CD4-positive, alpha-beta T cell (primary cell): ENCODE measurements at regions of chr13 and their contacts with region 1.

Region 1: DNA sequence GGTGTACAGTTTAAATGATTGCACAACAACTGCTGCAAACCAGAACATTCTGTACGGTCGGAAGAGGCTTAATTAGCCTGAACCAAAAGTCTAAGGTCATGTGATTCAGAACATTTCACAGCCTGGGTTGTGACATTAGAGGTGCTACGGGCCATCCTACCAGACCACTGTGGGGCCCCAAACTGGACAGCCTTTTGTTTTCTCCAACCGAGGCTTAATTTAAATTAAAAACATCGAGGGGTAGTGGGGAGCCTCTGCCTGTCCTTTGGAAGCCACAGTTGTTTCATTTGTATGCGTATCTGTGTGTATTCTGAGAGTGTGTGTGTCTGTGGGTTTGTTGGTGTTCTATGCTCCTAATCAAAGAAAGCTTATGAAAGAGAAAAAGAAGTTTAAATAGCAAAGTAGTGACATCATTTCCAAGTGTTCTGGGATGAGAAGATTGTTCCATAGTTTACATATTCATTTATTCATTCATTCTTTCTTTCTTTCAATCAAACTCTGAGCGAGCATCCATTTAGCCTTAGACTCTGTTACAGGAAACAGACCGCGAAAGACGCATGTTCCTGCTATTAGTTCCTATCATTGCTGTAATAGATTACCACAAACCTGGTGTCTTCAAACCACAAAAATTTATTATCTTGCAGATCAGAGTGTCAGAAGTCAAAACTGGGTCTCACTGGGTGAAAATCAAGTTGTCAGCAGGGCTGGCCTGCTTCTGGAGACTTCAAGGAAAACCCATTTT is 444.8 kb downstream of the FOXO1 start:
- DNase-seq: peak in 11 of 14 experiments; percentile 13 to 87 (median 40)
- ATAC-seq: peak; percentile 83
- H3K4me3 ChIP-seq: peak overlapping the region; percentile 19
- H3K4me3 Mint-ChIP-seq: peak overlapping the region; percentile 68
- H3K27ac ChIP-seq: peak overlapping the region in 1 of 2 donors; percentile 70
- H3K27ac Mint-ChIP-seq: peak overlapping the region; percentile 85
- H3K4me1 ChIP-seq: peaks cover 40% of the 10 kb centered on the region
- H3K4me1 Mint-ChIP-seq: peaks cover 48% of the 10 kb centered on the region
- H3K27me3 ChIP-seq: no peaks in the 10 kb centered on the region
- H3K27me3 Mint-ChIP-seq: no peaks in the 10 kb centered on the region
- CTCF ChIP-seq: no peak

Region 2: GRCh38 chr13:40149611-40150274 is 71.9 kb before region 1 on chr13:
- CTCF ChIA-PET with region 1: no interaction called
- POLR2A ChIA-PET with region 1: no interaction called
- intact Hi-C with region 1: loop called in 1 of 2 experiments (anchors 5 kb)
- DNase-seq: no peak
- ATAC-seq: no peak
- H3K4me3 ChIP-seq: no peak overlapping the region
- H3K4me3 Mint-ChIP-seq: no peak overlapping the region
- H3K27ac ChIP-seq: no peak overlapping the region
- H3K27ac Mint-ChIP-seq: no peak overlapping the region
- H3K4me1 ChIP-seq: peaks cover 38% of the 10 kb centered on the region
- H3K4me1 Mint-ChIP-seq: peaks cover 79% of the 10 kb centered on the region
- H3K27me3 ChIP-seq: no peaks in the 10 kb centered on the region
- H3K27me3 Mint-ChIP-seq: no peaks in the 10 kb centered on the region
- CTCF ChIP-seq: no peak

Region 3: DNA sequence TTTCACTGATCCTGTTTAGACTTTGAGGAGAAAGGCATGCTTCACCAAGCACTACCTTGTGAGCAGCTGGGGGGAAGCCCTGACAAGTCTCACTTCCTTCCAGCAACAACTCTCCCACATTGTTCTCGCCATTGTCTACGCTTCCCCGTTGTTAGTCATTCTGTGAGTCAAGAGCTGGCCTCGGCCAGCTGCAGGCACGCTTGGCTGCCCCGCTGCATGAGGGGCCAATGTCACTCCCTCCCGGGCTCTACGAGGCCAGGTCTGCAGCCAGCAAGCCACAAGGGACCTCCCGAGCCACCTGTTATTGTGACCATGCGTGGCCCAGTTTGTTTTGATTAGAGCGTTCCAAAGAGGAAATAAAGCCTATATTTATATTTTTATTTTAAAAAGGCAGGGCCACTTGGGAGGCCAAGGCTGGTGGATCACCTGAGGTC is 223.9 kb after region 1 on chr13:
- CTCF ChIA-PET with region 1: no interaction called
- POLR2A ChIA-PET with region 1: no interaction called
- intact Hi-C with region 1: no loop called
- DNase-seq: peak in 2 of 14 experiments; percentile 64 to 74
- ATAC-seq: no peak
- H3K4me3 ChIP-seq: no peak overlapping the region
- H3K4me3 Mint-ChIP-seq: no peak overlapping the region
- H3K27ac ChIP-seq: no peak overlapping the region
- H3K27ac Mint-ChIP-seq: no peak overlapping the region
- H3K4me1 ChIP-seq: peaks cover 7% of the 10 kb centered on the region
- H3K4me1 Mint-ChIP-seq: peaks cover 11% of the 10 kb centered on the region
- H3K27me3 ChIP-seq: no peaks in the 10 kb centered on the region
- H3K27me3 Mint-ChIP-seq: no peaks in the 10 kb centered on the region
- CTCF ChIP-seq: no peak